SK-N-SH (cell line): ENCODE measurements at regions of chr1 and their contacts with region 1.

Region 1: DNA sequence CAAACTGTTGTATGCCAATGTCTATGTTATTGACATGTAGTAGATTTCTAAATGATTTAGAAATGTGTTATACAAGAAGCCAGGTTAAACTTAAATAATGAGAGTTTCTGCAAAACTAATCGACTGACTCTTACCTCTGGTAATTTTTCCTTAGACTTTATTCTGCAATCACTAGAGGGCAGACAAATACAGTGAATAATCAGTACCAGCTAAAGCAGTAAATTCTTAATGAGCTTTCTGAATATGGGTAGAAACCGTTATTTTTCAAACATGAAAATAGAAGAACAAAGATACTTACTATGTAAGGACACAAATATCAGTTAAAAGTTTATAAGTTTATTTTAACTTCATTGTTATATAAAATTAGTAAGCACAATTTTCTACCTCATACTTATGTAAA is 97.9 kb upstream of the RGS1 start:
- DNase-seq: peak; percentile 31
- H3K4me3 ChIP-seq: no peak overlapping the region
- H3K27ac ChIP-seq: no peak overlapping the region; a peak in 1 of 4 replicates
- H3K4me1 ChIP-seq: peaks cover 0 to 5% of the 10 kb centered on the region in 2 experiments; a peak in 2 of 4 replicates
- H3K27me3 ChIP-seq: no peaks in the 10 kb centered on the region
- CTCF ChIP-seq: peak; percentile 80
- EP300 ChIP-seq: no peak
- RAD21 ChIP-seq: peak; percentile 92

Region 2: GRCh38 chr1:192461684-192462083 is 15.9 kb before region 1 on chr1:
- CTCF ChIA-PET with region 1: interaction called, 11 read pairs
- POLR2A ChIA-PET with region 1: no interaction called
- DNase-seq: no peak
- H3K4me3 ChIP-seq: no peak overlapping the region
- H3K27ac ChIP-seq: no peak overlapping the region
- H3K4me1 ChIP-seq: no peaks in the 10 kb centered on the region; a peak in 1 of 4 replicates
- H3K27me3 ChIP-seq: no peaks in the 10 kb centered on the region
- CTCF ChIP-seq: no peak
- EP300 ChIP-seq: no peak
- RAD21 ChIP-seq: no peak

Region 3: GRCh38 chr1:192609110-192610079 is 131.8 kb after region 1 on chr1:
- CTCF ChIA-PET with region 1: interaction called, 107 read pairs
- POLR2A ChIA-PET with region 1: no interaction called
- DNase-seq: no peak
- H3K4me3 ChIP-seq: no peak overlapping the region
- H3K27ac ChIP-seq: no peak overlapping the region
- H3K4me1 ChIP-seq: peaks cover 0 to 5% of the 10 kb centered on the region in 2 experiments; a peak in 3 of 4 replicates
- H3K27me3 ChIP-seq: no peaks in the 10 kb centered on the region
- CTCF ChIP-seq: no peak
- EP300 ChIP-seq: no peak
- RAD21 ChIP-seq: no peak

Region 4: GRCh38 chr1:192615055-192615454 is 137.4 kb after region 1 on chr1:
- CTCF ChIA-PET with region 1: interaction called, 107 read pairs
- POLR2A ChIA-PET with region 1: no interaction called
- DNase-seq: no peak
- H3K4me3 ChIP-seq: no peak overlapping the region
- H3K27ac ChIP-seq: no peak overlapping the region
- H3K4me1 ChIP-seq: peaks cover 0 to 5% of the 10 kb centered on the region in 2 experiments; a peak in 2 of 4 replicates
- H3K27me3 ChIP-seq: no peaks in the 10 kb centered on the region
- CTCF ChIP-seq: no peak
- EP300 ChIP-seq: no peak
- RAD21 ChIP-seq: no peak

Region 5: GRCh38 chr1:192678099-192678498 is 200.5 kb after region 1 on chr1:
- CTCF ChIA-PET with region 1: no interaction called
- POLR2A ChIA-PET with region 1: no interaction called
- DNase-seq: no peak
- H3K4me3 ChIP-seq: no peak overlapping the region
- H3K27ac ChIP-seq: no peak overlapping the region
- H3K4me1 ChIP-seq: no peaks in the 10 kb centered on the region; a peak in 1 of 4 replicates
- H3K27me3 ChIP-seq: no peaks in the 10 kb centered on the region
- CTCF ChIP-seq: no peak
- EP300 ChIP-seq: no peak
- RAD21 ChIP-seq: no peak